AG04449 (cell line): ENCODE measurements at regions of chr10 and their contacts with region 1.

Region 1: DNA sequence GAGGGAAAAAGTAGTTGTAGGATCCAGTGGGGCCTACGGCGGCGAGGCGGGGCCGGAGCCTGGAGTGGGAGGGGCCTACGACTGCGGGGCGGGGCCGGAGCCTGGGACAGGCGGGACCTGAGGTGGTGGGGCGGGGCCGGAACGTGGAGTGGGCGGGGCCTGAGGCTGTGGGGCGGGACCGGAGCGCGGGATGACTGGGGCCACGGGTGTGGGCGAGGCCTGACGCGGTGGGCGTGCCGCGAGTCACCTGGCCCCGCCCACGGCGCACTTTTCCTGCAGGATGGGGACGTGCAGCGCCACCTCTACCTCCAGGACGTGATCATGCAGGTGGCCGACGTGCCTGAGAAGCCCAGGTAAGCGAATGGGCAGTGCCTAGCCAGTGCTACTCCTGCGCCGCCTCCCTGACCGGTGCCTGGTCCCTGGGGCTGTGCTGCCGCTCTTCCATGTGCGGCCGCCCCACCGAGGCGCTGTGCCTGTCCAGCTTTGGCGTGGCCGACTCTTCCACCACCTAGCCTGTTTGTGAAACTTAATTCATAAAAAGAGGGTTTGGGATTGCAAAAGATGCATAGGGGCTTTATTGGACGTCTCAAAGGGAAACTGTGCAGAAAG is 501 bp downstream of the ZNF511 start:
- DNase-seq: no peak
- H3K4me3 ChIP-seq: peak overlapping the region; percentile 66
- CTCF ChIP-seq: no peak

Region 2: DNA sequence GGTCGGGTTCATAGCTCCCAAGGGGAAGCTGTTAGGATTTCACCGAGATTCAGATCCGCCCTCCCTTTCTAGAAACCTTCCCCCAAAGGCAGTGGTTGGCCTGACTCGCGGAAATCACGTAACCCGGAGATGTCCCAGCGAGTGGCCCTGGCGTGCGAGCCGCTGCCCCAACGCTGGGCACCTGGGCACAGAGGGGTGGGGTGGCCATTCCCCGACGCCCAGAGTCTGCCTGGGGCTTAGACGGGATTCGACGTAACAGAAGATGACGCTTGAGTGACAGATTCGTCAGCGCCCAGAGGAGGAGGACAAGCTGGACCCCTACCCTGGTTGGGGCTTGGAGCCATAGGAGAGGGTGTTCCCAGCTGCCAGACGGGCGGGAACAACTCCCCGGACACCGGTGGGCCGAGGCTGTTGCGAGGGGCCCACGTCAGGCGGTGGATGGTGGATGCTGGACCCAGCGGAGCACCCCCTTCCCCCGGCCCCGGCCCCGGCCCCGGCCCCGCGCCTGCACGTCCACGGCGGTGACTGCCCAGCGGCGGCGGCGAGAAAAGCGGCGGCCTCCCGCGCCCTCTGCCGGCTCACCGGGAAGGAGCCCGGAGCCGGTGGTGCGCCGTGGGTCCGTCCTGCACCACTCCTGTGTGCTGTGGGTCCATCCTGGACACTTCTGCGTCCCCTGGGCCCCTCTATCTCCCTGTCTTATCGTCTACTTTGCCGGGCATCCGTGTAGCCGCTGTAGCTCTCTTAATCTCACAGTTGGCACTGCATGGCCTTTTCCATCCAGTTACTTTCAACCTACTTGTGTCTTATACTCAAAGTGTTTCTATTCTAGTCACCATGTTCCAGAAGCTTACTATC is 184.6 kb before region 1 on chr10:
- CTCF ChIA-PET with region 1: no interaction called
- POLR2A ChIA-PET with region 1: no interaction called
- DNase-seq: no peak
- H3K4me3 ChIP-seq: no peak overlapping the region
- CTCF ChIP-seq: peak; percentile 67

Region 3: GRCh38 chr10:133287832-133288500 is 21.2 kb before region 1 on chr10:
- CTCF ChIA-PET with region 1: interaction called, 10 read pairs
- POLR2A ChIA-PET with region 1: no interaction called
- DNase-seq: no peak
- H3K4me3 ChIP-seq: no peak overlapping the region
- CTCF ChIP-seq: no peak

Region 4: GRCh38 chr10:133342942-133343341 is 33.7 kb after region 1 on chr10:
- CTCF ChIA-PET with region 1: no interaction called
- POLR2A ChIA-PET with region 1: no interaction called
- DNase-seq: no peak
- H3K4me3 ChIP-seq: no peak overlapping the region
- CTCF ChIP-seq: no peak